SK-N-SH (cell line): ENCODE measurements at regions of chr7 and their contacts with region 1.

Region 1: DNA sequence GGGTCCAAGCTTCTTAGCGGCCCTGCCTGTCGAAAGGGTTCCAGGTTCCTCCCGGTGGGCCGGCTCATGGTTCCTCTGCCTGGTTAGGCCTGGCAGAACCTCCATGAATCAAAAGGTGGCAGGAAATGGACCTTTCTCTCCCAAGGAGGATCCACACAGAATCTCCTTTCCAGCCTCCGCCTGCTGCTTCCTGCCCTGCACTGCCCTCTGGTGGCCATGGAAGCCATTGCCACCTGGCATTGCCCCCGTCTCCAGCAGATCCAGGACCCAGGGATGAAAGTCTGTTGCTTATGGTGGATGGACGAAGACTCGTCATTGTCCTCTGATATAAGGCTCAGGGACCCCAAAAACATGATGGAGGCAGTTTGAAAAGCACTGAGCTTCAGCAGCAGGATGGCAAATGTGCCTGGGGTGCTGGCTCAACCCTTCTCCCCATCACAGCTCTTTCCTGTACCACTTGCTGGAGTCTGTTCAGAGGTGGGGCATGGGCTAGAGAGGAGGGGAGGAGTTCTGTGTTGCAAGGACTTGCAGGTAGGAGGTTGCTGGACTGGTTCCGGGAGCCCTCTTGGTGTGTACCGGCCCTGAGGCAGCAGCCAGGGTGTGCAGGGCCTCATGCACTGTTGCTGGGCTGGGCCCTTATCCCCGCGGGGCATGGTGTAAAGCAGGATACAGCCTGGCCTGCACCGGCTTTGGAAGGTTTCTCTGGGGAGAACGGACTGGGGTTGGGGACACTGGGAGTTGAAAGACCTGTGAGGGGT is 11.3 kb upstream of the INMT start:
- DNase-seq: peak; percentile 96
- H3K4me3 ChIP-seq: no peak overlapping the region; a peak in 1 of 4 replicates
- H3K27ac ChIP-seq: no peak overlapping the region
- H3K4me1 ChIP-seq: peaks cover 0 to 3% of the 10 kb centered on the region in 2 experiments; a peak in 1 of 4 replicates
- H3K27me3 ChIP-seq: peaks cover 35% of the 10 kb centered on the region; the same call in 1 of the 2 replicates
- CTCF ChIP-seq: peak; percentile 100
- EP300 ChIP-seq: no peak
- RAD21 ChIP-seq: peak; percentile 99

Region 2: GRCh38 chr7:30548762-30549344 is 191.8 kb before region 1 on chr7:
- CTCF ChIA-PET with region 1: interaction called, 69 read pairs
- POLR2A ChIA-PET with region 1: no interaction called
- DNase-seq: peak; percentile 77
- H3K4me3 ChIP-seq: peak overlapping the region in 1 of 2 experiments; percentile 1; a peak in 1 of 4 replicates
- H3K27ac ChIP-seq: peak overlapping the region in 1 of 2 experiments; percentile 35; a peak in 1 of 4 replicates
- H3K4me1 ChIP-seq: peaks cover 5 to 18% of the 10 kb centered on the region in 2 experiments; a peak in 3 of 4 replicates
- H3K27me3 ChIP-seq: no peaks in the 10 kb centered on the region
- CTCF ChIP-seq: peak; percentile 96
- EP300 ChIP-seq: no peak
- RAD21 ChIP-seq: peak; percentile 79

Region 3: GRCh38 chr7:30617359-30617758 is 123.2 kb before region 1 on chr7:
- CTCF ChIA-PET with region 1: interaction called, 18 read pairs
- POLR2A ChIA-PET with region 1: no interaction called
- DNase-seq: no peak
- H3K4me3 ChIP-seq: no peak overlapping the region
- H3K27ac ChIP-seq: no peak overlapping the region
- H3K4me1 ChIP-seq: no peaks in the 10 kb centered on the region
- H3K27me3 ChIP-seq: no peaks in the 10 kb centered on the region
- CTCF ChIP-seq: no peak
- EP300 ChIP-seq: no peak
- RAD21 ChIP-seq: no peak

Region 4: GRCh38 chr7:30663397-30663796 is 77.2 kb before region 1 on chr7:
- CTCF ChIA-PET with region 1: interaction called, 24 read pairs
- POLR2A ChIA-PET with region 1: no interaction called
- DNase-seq: no peak
- H3K4me3 ChIP-seq: no peak overlapping the region
- H3K27ac ChIP-seq: no peak overlapping the region
- H3K4me1 ChIP-seq: peaks cover 0 to 12% of the 10 kb centered on the region in 2 experiments; a peak in 2 of 4 replicates
- H3K27me3 ChIP-seq: peaks cover 8% of the 10 kb centered on the region
- CTCF ChIP-seq: no peak
- EP300 ChIP-seq: no peak
- RAD21 ChIP-seq: no peak

Region 5: GRCh38 chr7:30702200-30702599 is 38.4 kb before region 1 on chr7:
- CTCF ChIA-PET with region 1: interaction called, 19 read pairs
- POLR2A ChIA-PET with region 1: no interaction called
- DNase-seq: no peak
- H3K4me3 ChIP-seq: no peak overlapping the region
- H3K27ac ChIP-seq: no peak overlapping the region
- H3K4me1 ChIP-seq: peaks cover 0 to 9% of the 10 kb centered on the region in 2 experiments; a peak in 1 of 4 replicates
- H3K27me3 ChIP-seq: peaks cover 31% of the 10 kb centered on the region
- CTCF ChIP-seq: no peak; the same call in 1 of the 2 replicates
- EP300 ChIP-seq: no peak
- RAD21 ChIP-seq: no peak

Region 6: GRCh38 chr7:30727061-30727945 is 13.3 kb before region 1 on chr7:
- CTCF ChIA-PET with region 1: interaction called, 47 read pairs
- POLR2A ChIA-PET with region 1: no interaction called
- DNase-seq: no peak
- H3K4me3 ChIP-seq: no peak overlapping the region
- H3K27ac ChIP-seq: no peak overlapping the region
- H3K4me1 ChIP-seq: peaks cover 0 to 5% of the 10 kb centered on the region in 2 experiments; a peak in 1 of 4 replicates
- H3K27me3 ChIP-seq: peaks cover 46% of the 10 kb centered on the region
- CTCF ChIP-seq: no peak
- EP300 ChIP-seq: no peak
- RAD21 ChIP-seq: no peak

Region 7: GRCh38 chr7:30791114-30791779 is 50.6 kb after region 1 on chr7:
- CTCF ChIA-PET with region 1: interaction called, 10 read pairs
- POLR2A ChIA-PET with region 1: no interaction called
- DNase-seq: no peak
- H3K4me3 ChIP-seq: no peak overlapping the region
- H3K27ac ChIP-seq: no peak overlapping the region
- H3K4me1 ChIP-seq: peaks cover 3 to 10% of the 10 kb centered on the region in 2 experiments; a peak in 1 of 4 replicates
- H3K27me3 ChIP-seq: no peaks in the 10 kb centered on the region
- CTCF ChIP-seq: no peak
- EP300 ChIP-seq: no peak
- RAD21 ChIP-seq: peak; percentile 2; the same call in 1 of the 2 replicates